GM13977 (cell line): ENCODE measurements at regions of chr4 and their contacts with region 1.

Region 1: GRCh38 chr4:154332681-154333421 is 158.7 kb downstream of the DCHS2 start:
- DNase-seq: no peak
- CTCF ChIP-seq: peak; percentile 15

Region 2: DNA sequence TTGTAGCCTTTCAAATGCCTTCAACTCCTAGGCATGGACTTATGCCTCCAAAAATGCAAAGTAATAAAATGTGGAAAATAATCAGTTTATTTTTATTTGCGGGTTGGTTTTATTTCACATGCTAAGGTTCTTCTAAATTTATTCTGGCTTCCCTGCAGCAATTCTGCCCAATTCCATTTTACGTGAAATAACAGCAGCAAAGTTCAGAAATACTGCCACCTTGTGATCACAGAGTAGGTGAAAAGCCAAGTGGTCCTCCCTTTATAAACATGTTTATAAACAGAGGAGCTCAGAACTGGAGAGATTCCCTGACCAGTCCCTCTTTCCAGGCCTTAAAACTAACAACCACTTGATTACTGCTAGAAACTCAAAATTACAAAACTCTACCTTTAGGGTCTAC is 173.4 kb after region 1 on chr4:
- in situ Hi-C with region 1: loop called (anchors 10 kb)
- DNase-seq: no peak
- CTCF ChIP-seq: peak; percentile 53